IMR-90 (cell line): ENCODE measurements at regions of chr12 and their contacts with region 1.

Region 1: DNA sequence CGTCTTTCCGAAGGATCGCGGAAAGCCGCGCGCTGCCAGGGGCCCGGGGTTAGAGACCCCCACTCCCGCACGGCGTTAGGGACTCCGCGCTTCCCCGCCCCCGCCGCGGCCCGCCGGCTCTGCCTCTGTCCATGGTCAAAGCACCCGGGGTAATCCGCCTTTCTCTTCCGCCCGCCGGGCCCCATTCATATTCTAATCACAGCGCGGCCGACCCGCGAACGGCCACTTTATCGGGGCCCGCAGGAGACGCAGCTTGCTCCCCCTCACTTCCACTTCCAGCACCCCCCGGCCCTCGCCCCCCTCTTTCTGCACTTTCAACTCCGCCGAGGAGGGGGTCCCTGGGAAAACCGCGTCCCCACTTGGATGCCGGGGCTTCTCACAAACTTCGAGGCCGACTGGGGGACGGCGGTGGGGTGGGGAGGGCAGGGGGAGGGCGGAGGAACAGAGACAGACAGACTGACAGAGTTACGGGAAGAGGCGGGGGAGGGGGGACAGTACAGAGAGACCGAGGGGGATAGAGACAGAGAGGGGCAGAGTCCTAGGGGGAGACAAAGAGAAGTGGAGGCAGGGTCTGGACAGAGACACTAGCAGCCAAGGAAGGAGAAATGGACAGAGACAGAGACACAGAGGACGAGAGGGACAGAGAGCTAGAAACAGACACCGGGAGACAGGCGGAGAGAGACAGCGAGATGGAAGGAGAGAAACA is 1.1 kb upstream of the RFX4 start:
- DNase-seq: no peak
- ATAC-seq: peak; percentile 84
- H3K4me3 ChIP-seq: no peak overlapping the region
- H3K27ac ChIP-seq: no peak overlapping the region
- H3K4me1 ChIP-seq: no peaks in the 10 kb centered on the region; the same call in 1 of the 2 replicates
- H3K27me3 ChIP-seq: peaks cover 77% of the 10 kb centered on the region
- CTCF ChIP-seq: no peak
- POLR2A ChIP-seq: no peak
- RAD21 ChIP-seq: no peak

Region 2: GRCh38 chr12:106417926-106418910 is 163.5 kb before region 1 on chr12:
- CTCF ChIA-PET with region 1: no interaction called
- POLR2A ChIA-PET with region 1: no interaction called
- dilution Hi-C with region 1: no loop called
- in situ Hi-C with region 1: no loop called
- intact Hi-C with region 1: loop called (anchors 10 kb)
- DNase-seq: peak; percentile 76
- ATAC-seq: peak; percentile 75
- H3K4me3 ChIP-seq: no peak overlapping the region
- H3K27ac ChIP-seq: no peak overlapping the region
- H3K4me1 ChIP-seq: peaks cover 11% of the 10 kb centered on the region
- H3K27me3 ChIP-seq: no peaks in the 10 kb centered on the region
- CTCF ChIP-seq: no peak
- POLR2A ChIP-seq: no peak
- RAD21 ChIP-seq: no peak

Region 3: DNA sequence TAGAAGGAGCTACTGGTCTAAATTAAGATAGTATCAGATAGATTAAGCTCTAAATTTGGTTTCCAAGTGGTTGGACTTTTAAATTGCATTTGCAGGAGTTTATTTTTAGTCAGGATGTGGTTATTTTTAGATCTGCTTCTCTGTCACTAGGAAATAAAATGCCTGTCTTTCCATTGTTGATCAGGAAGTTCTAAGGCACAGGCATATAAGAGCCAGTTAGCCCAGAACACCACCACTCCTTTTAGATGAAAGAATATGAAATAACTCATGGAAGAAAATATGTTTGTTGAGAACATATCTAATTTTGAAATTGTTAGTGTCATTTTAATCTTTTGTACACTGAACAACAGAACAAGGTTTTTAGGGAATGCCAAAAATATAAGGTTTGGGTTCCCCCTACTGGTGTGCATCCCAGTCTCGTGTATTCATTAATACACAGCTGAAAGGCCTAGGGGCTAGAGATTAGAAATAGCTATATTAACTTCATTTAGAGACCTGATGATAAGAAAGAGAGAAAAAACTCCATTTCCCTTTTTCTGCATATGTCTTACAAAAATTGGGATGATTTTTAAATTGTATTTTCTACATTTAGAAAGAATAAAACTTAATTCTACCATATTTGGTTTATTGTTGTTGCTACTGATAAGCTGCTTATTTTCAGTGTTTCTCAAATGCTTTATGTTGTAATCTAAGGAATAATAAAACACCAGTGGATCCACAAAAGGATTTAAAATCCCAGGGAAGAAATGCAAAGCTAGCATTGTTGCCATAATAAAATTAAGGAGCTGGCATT is 260.0 kb after region 1 on chr12:
- CTCF ChIA-PET with region 1: no interaction called
- POLR2A ChIA-PET with region 1: no interaction called
- dilution Hi-C with region 1: no loop called
- in situ Hi-C with region 1: no loop called
- intact Hi-C with region 1: loop called (anchors 10 kb)
- DNase-seq: peak; percentile 45
- ATAC-seq: peak; percentile 65
- H3K4me3 ChIP-seq: no peak overlapping the region
- H3K27ac ChIP-seq: no peak overlapping the region
- H3K4me1 ChIP-seq: peaks cover 5% of the 10 kb centered on the region
- H3K27me3 ChIP-seq: no peaks in the 10 kb centered on the region
- CTCF ChIP-seq: peak; percentile 65
- POLR2A ChIP-seq: no peak
- RAD21 ChIP-seq: peak; percentile 72